Activated CD4-positive, alpha-beta T cell treated with anti-CD3 and anti-CD28 coated beads for 36 hours (primary cell): ENCODE measurements at regions of chr11 and their contacts with region 1.

Region 1: GRCh38 chr11:65817835-65818742 is 15.7 kb upstream of the SNX32 start:
- DNase-seq: peak; percentile 98
- ATAC-seq: peak; percentile 91
- H3K4me3 Mint-ChIP-seq: peak overlapping the region; percentile 74
- H3K27ac Mint-ChIP-seq: peak overlapping the region; percentile 87
- H3K4me1 Mint-ChIP-seq: peaks cover 14% of the 10 kb centered on the region
- H3K27me3 Mint-ChIP-seq: no peaks in the 10 kb centered on the region

Region 2: DNA sequence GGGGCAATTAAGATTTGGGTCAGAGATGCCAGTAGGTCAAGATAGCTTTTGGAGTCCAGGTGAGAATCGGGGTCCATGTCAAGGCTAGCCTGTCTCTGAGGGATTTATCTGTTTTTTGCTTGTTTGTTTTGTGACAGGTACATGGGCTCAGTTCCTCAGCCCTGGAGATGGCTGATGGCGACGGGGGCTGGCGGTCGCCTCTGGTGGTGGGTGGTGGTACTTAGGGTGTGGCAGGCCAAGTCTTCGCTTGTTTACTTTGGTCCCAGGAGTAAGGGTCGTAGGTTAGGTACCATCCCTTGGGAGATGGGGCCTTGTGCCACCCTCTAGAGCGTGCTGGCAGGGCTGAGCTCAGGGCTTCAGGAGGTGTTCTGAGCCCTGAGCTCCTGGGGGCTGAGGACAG is 440.3 kb before region 1 on chr11:
- CTCF ChIA-PET with region 1: no interaction called
- POLR2A ChIA-PET with region 1: no interaction called
- intact Hi-C with region 1: no loop called
- DNase-seq: no peak
- ATAC-seq: no peak
- H3K4me3 Mint-ChIP-seq: no peak overlapping the region
- H3K27ac Mint-ChIP-seq: peak overlapping the region; percentile 18
- H3K4me1 Mint-ChIP-seq: peaks cover 2% of the 10 kb centered on the region
- H3K27me3 Mint-ChIP-seq: no peaks in the 10 kb centered on the region

Region 3: DNA sequence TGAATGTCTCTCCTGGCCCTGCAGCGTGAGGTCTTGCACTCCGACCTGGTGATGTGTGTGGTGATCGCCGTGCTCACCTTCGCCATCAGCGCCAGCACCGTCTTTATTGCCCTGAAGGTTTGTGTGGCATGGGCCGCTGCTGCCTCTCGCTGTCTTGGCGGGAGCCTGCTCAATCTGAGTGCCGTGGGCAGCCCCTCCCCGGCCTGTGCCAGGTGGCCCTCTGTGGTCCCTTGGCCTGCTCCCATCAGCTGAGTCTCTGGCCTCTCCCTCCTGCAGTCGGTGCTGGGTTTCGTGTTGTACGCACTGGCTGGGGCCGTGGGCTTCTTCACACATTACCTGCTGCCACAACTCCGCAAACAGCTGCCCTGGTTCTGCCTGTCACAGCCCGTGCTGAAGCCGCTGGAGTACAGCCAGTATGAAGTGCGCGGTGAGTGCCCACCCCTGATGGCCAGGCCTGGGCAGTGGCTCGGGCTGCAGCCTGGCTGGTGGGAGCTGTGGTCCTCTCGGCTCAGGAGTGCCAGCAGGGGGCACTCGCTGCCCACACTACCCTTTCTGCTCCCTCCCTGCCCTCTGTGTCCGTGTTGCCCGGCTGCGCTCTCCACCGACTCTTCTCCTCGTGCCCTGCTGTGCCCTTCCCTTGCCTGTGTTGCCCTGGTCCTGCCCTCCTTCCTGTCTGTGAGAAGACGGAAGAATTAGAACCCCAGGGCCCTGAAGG is 192.3 kb before region 1 on chr11:
- CTCF ChIA-PET with region 1: interaction called, 3 read pairs
- POLR2A ChIA-PET with region 1: no interaction called
- intact Hi-C with region 1: loop called in 1 of 2 experiments (anchors 1 kb)
- DNase-seq: peak; percentile 73
- ATAC-seq: peak; percentile 85
- H3K4me3 Mint-ChIP-seq: no peak overlapping the region
- H3K27ac Mint-ChIP-seq: no peak overlapping the region
- H3K4me1 Mint-ChIP-seq: no peaks in the 10 kb centered on the region
- H3K27me3 Mint-ChIP-seq: no peaks in the 10 kb centered on the region

Region 4: DNA sequence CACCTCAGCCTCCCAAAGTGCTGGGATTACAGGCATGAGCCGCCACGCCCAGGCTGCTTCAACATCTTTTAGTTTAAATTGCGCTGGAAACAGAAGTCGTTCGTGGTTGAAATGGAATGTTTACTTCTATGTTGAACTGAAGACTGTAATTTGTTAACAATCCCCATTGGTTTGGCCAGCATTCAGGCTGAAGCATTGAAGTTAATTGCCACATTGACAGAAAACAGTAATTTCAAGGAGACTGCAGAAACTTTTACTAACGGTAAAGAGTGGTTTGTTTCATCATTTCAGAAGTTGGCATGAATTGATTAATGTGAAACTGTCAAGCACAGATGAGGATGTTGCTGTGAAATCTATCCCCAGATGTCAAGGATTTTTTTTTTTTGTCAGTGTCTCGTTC is 51.6 kb before region 1 on chr11:
- CTCF ChIA-PET with region 1: interaction called, 12 read pairs
- POLR2A ChIA-PET with region 1: no interaction called
- intact Hi-C with region 1: loop called in 1 of 2 experiments (anchors 10 kb)
- DNase-seq: no peak
- ATAC-seq: no peak
- H3K4me3 Mint-ChIP-seq: no peak overlapping the region
- H3K27ac Mint-ChIP-seq: no peak overlapping the region
- H3K4me1 Mint-ChIP-seq: peaks cover 4% of the 10 kb centered on the region
- H3K27me3 Mint-ChIP-seq: no peaks in the 10 kb centered on the region

Region 5: GRCh38 chr11:65779851-65780577 is 38.1 kb before region 1 on chr11:
- CTCF ChIA-PET with region 1: interaction called, 74 read pairs
- POLR2A ChIA-PET with region 1: interaction called, 3 read pairs
- intact Hi-C with region 1: loop called (anchors 1 kb)
- DNase-seq: peak; percentile 94
- ATAC-seq: peak; percentile 81
- H3K4me3 Mint-ChIP-seq: peak overlapping the region; percentile 87
- H3K27ac Mint-ChIP-seq: peak overlapping the region; percentile 83
- H3K4me1 Mint-ChIP-seq: peaks cover 27% of the 10 kb centered on the region
- H3K27me3 Mint-ChIP-seq: peaks cover 10% of the 10 kb centered on the region

Region 6: DNA sequence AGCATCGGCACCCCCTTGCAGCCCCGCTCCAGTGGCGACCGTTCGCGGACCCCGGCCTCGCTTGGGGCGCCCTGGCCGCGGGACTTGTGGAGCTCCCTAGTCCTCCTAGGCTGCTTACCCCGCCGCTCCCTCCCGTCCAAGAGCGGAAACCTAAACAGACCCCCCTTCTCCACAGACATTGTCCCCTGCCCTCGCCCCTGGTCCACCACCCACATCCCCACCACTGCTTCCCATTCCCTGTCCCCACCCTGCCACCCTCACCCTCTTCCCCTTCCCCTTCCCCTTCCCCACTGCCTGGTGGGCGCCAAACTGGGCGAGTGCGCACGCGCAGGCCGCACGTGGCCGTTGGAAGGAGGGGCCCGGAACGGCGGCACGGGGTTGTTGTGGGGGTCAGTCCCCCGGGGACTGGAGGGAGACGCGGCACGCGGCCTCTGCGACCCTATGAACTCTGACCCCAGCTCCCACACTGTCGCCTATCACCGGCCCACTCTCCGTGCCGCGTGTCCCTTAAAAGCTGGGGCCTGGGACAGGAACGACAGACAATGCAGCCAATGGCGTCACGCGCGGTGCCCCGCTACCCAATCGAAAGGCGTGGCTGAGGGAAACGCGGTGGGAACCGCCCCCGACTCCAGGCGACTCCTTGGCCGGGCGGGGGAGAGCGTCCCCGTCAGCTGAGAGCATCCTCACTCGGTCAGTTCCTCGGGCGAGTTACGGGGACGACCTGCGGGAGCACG is 15.4 kb after region 1 on chr11 and contains the start of gene SNX32:
- CTCF ChIA-PET with region 1: interaction called, 30 read pairs
- POLR2A ChIA-PET with region 1: no interaction called
- intact Hi-C with region 1: loop called in 1 of 2 experiments (anchors 1 kb)
- DNase-seq: peak; percentile 98
- ATAC-seq: peak; percentile 99
- H3K4me3 Mint-ChIP-seq: no peak within 1 kb of the TSS
- H3K27ac Mint-ChIP-seq: no peak within 1 kb of the TSS
- H3K4me1 Mint-ChIP-seq: peaks cover 22% of the 10 kb centered on the region
- H3K27me3 Mint-ChIP-seq: no peaks in the 10 kb centered on the region
- total RNA-seq, gene SNX32: 2.9 to 3.0 TPM